ENCODE measurements at regions of chr2 and their contacts with region 1.

Region 1: DNA sequence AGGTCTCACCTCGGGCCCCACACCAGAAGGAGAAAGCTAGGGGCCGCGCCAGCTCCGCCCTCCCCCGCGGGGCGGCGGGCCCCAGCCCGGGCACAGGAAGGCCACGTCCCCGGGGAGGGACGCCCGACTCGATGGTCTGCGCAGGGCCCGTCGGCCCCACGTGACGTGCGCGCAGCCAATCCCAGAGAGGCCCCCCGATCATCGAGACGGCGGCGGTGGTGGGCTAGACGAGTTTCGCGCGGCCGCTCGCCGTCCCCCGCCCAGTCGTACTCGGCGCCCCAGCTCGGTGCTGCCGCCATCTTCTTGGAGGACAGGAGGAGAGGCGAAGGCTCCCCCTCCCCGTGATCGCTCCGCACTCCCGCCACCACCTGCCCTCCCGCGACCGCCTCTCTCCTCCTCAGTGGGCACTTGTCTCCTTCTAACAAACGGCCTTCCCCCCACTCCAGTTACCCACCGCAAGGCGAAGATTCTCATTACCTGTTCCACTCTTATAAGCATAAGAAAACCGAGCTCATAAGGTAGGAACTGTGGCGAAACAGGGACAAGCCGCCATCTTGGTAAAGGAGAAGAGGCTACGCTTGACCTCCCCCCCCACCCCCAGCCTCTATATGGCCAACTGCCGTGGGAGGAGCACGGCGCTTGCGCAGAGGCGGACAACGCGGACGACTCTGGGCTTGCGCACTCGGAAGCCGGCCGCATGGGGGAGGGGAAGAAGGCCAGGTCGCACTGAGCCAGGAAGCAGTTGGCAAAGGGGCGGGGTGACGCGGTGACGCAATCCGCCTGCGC is at the start of gene HDLBP:
- DNase-seq: peak; percentile 100
- H3K4me3 Mint-ChIP-seq: peak within 1 kb of the TSS; percentile 100
- H3K27ac Mint-ChIP-seq: peak within 1 kb of the TSS; percentile 100
- H3K4me1 Mint-ChIP-seq: peaks cover 71% of the 10 kb centered on the region
- H3K27me3 Mint-ChIP-seq: no peaks in the 10 kb centered on the region
- total RNA-seq, gene HDLBP: 278 to 297 TPM

Region 2: DNA sequence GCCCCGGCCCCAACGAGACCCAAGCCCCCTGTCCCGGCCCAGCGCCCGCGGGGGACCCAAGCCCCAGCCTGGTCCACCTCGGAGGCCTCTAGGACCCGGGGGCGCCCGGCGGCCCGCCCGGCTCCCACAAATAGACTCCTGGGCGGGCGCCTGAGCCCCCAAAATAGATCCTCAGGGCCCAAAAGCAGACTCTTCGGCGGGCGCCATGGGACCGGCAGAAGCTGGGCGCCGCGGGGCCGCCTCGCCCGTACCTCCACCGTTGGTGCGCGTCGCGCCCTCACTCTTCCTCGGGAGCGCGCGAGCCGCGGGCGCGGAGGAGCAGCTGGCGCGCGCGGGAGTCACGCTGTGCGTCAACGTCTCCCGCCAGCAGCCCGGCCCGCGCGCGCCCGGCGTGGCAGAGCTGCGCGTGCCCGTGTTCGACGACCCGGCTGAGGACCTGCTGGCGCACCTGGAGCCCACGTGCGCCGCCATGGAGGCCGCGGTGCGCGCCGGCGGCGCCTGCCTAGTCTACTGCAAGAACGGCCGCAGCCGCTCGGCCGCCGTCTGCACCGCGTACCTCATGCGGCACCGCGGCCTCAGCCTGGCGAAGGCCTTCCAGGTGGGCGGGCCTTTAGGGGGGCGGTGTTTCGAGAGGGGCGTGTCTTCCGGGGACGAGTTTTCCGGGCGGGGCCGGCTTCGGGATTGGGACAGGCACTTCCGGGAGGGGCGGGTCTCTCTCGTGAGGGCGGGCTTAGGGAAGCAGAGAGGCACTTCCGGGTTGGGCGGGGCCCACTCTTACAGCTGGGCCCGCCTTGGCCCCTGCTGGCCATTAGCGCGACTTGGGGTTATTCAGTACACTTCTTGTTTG is 754.6 kb before region 1 on chr2:
- CTCF ChIA-PET with region 1: no interaction called
- intact Hi-C with region 1: loop called (anchors 2 kb)
- DNase-seq: peak; percentile 100
- H3K4me3 Mint-ChIP-seq: peak overlapping the region; percentile 94
- H3K27ac Mint-ChIP-seq: peak overlapping the region; percentile 99
- H3K4me1 Mint-ChIP-seq: peaks cover 69% of the 10 kb centered on the region
- H3K27me3 Mint-ChIP-seq: no peaks in the 10 kb centered on the region

Region 3: DNA sequence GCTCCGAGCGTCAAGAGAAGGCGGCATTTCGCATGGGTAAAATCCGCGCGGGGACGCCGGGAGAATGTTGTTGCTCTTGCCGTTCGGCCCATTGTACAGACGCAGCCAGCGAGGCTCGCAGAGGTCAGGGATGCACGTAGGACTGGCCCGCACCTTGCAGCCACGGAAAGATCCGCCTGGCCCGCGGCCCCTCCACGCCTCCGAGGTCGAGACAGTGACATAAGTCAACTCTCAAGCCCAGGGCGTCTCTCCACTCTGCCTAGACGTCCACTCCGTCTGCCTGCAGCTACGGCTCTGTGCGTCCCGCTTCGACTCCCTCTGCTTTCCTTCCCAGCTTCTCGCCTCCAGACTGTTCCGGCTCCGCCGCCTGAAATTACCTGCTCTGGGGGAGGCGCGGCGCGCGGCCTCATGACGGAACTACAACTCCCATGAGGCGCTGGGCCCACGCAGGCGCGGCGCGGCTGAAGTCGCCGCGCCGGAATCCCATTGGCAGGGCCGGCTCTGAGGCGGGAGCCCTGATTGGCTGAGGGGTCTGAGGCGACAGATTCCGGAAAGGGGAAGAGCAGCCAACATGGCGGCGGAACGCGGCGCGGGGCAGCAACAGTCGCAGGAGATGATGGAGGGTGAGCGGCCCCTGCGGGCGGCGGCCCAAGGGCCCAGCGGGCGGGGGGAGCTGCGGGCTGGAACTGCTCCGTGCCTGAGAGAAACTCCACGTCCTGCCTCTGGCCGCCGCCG is 165.2 kb before region 1 on chr2 and contains the start of gene PPP1R7:
- CTCF ChIA-PET with region 1: no interaction called
- intact Hi-C with region 1: loop called (anchors 1 kb)
- DNase-seq: peak; percentile 97
- H3K4me3 Mint-ChIP-seq: peak within 1 kb of the TSS; percentile 96
- H3K27ac Mint-ChIP-seq: peak within 1 kb of the TSS; percentile 85
- H3K4me1 Mint-ChIP-seq: peaks cover 44% of the 10 kb centered on the region
- H3K27me3 Mint-ChIP-seq: no peaks in the 10 kb centered on the region
- total RNA-seq, gene PPP1R7: 91.2 to 93.8 TPM

Region 4: GRCh38 chr2:241355983-241356870 is 40.9 kb after region 1 on chr2 and contains the start of gene FARP2:
- CTCF ChIA-PET with region 1: no interaction called
- intact Hi-C with region 1: loop called (anchors 1 kb)
- DNase-seq: peak; percentile 99
- H3K4me3 Mint-ChIP-seq: peak within 1 kb of the TSS; percentile 78
- H3K27ac Mint-ChIP-seq: peak within 1 kb of the TSS; percentile 76
- H3K4me1 Mint-ChIP-seq: peaks cover 27% of the 10 kb centered on the region
- H3K27me3 Mint-ChIP-seq: no peaks in the 10 kb centered on the region
- total RNA-seq, gene FARP2: 19.5 to 19.6 TPM

Region 5: DNA sequence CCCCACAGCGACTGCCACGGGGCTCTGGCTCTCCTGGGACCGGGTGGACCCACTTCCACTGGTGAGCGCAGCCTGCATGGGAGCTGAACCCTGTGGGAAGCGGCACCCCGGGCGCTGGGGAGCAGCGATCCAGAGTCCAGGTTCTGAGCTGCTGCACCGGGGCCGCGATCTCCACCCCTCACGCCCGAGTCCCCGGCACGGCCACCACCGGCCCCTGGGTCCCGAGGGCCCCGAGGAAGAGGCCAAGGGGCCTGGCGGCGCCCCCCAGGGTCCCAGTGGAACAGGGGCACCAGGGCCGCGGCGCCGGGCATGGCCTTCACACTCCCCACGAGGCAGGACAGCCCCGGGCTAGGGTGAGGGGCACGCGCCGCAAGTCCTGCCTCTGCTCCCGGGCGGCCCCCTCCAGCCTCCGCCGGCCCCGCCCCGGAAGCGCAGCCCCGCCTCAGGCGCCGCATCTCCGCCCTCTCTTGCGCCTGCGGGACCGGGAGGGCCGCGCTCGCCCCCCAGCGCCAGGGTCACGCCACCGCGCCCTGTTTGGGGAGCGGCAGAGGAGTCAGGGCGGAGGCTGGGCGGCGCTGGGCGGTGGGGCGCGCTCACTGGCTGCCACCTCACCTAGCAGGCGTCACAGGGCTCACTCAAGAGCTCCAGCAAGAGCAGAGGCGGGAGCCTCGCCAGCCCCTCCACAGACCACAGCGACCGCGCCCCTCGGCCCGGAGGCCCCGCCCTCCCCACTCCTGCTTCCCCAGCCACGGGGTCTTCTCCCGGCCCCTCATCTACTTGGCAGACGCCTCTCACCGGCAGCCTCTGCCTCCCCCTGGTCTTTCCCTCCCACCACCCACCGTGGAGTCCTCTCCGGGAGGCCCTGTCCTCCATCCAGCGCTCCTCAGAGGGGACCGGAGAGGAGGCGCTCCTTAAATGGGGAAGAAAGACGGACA is 294.8 kb after region 1 on chr2:
- CTCF ChIA-PET with region 1: no interaction called
- intact Hi-C with region 1: loop called (anchors 2 kb)
- DNase-seq: peak; percentile 90
- H3K4me3 Mint-ChIP-seq: peak overlapping the region; percentile 50
- H3K27ac Mint-ChIP-seq: no peak overlapping the region
- H3K4me1 Mint-ChIP-seq: peaks cover 15% of the 10 kb centered on the region
- H3K27me3 Mint-ChIP-seq: no peaks in the 10 kb centered on the region

Region 6: DNA sequence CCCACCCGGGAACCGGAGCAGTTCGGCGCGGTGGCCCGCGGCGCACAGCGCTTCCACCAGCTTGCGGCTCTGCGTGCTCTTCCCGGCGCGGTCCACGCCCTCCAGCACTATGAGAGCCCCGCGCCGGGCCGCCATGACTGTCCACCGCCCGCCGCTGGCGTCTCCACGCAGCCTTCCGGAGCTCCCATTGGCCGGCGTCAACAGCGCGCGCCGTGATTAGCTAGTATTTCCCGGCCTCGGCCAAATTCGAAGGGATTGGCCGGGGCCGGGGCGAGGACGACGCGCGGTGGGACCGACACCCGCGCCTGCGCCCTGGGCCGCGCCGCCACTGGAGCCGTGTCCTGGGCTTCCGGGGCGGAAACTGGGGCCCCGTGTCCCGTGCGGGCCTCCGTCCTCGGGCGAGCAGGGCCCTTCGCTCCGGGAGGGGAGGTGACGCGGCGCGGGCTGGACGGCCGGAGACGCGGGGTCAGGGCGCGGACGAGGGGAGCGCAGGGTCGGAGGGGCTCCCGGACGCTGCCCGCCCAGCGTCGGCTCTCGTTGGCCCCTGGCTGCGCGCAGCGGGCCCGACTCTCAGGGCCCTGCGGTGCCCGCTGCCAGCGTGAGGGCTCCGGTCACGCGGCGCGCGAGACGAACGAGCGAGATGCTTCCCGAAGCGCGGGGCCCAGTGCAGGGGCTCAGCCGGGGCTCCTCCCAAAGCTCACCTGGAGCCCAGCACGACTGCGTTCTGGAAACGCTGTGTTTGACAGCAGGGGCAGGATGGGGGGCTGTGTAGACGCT is 371.6 kb after region 1 on chr2 and contains the start of gene DTYMK:
- CTCF ChIA-PET with region 1: interaction called, 3 read pairs
- intact Hi-C with region 1: loop called (anchors 5 kb)
- DNase-seq: peak; percentile 97
- H3K4me3 Mint-ChIP-seq: peak within 1 kb of the TSS; percentile 99
- H3K27ac Mint-ChIP-seq: peak within 1 kb of the TSS; percentile 94
- H3K4me1 Mint-ChIP-seq: peaks cover 39% of the 10 kb centered on the region
- H3K27me3 Mint-ChIP-seq: no peaks in the 10 kb centered on the region
- total RNA-seq, gene DTYMK: 88.0 to 93.8 TPM